Heart right ventricle (tissue), 16 donors: ENCODE measurements at regions of chr7 and their contacts with region 1.

Region 1: GRCh38 chr7:140003913-140004382 is 58.8 kb downstream of the PARP12 start:
- DNase-seq: no peak
- ATAC-seq: no peak
- H3K4me3 ChIP-seq: no peak overlapping the region
- H3K27ac ChIP-seq: no peak overlapping the region
- H3K4me1 ChIP-seq: no peaks in the 10 kb centered on the region
- H3K27me3 ChIP-seq: no peaks in the 10 kb centered on the region
- CTCF ChIP-seq: peak in 8 of 9 donors; percentile 11 to 58 (median 45)

Region 2: GRCh38 chr7:139494835-139495579 is 508.9 kb before region 1 on chr7:
- intact Hi-C with region 1: loop called (anchors 2 to 10 kb)
- DNase-seq: no peak
- ATAC-seq: peak in 1 of 8 donors; percentile 49
- H3K4me3 ChIP-seq: no peak overlapping the region
- H3K27ac ChIP-seq: no peak overlapping the region
- H3K4me1 ChIP-seq: peaks cover 0 to 13% (median 4%) of the 10 kb centered on the region in 9 donors
- H3K27me3 ChIP-seq: peaks cover 0 to 11% (median 8%) of the 10 kb centered on the region in 7 donors
- CTCF ChIP-seq: no peak

Region 3: GRCh38 chr7:139602143-139602722 is 401.7 kb before region 1 on chr7:
- intact Hi-C with region 1: loop called in 4 of 10 experiments (anchors 1 to 5 kb)
- DNase-seq: no peak
- ATAC-seq: peak in 7 of 8 donors; percentile 32 to 77 (median 47)
- H3K4me3 ChIP-seq: no peak overlapping the region
- H3K27ac ChIP-seq: no peak overlapping the region
- H3K4me1 ChIP-seq: peaks cover 0 to 16% (median 0%) of the 10 kb centered on the region in 9 donors
- H3K27me3 ChIP-seq: no peaks in the 10 kb centered on the region
- CTCF ChIP-seq: peak in 8 of 9 donors; percentile 39 to 67 (median 62)

Region 4: GRCh38 chr7:139645572-139646523 is 358.1 kb before region 1 on chr7:
- intact Hi-C with region 1: loop called (anchors 1 to 5 kb)
- DNase-seq: peak; percentile 78 to 89
- ATAC-seq: peak; percentile 49 to 74 (median 68)
- H3K4me3 ChIP-seq: no peak overlapping the region
- H3K27ac ChIP-seq: peak overlapping the region in 7 of 10 donors; percentile 16 to 84 (median 79)
- H3K4me1 ChIP-seq: peaks cover 5 to 58% (median 48%) of the 10 kb centered on the region in 9 donors
- H3K27me3 ChIP-seq: no peaks in the 10 kb centered on the region
- CTCF ChIP-seq: peak; percentile 88 to 94 (median 91)

Region 5: DNA sequence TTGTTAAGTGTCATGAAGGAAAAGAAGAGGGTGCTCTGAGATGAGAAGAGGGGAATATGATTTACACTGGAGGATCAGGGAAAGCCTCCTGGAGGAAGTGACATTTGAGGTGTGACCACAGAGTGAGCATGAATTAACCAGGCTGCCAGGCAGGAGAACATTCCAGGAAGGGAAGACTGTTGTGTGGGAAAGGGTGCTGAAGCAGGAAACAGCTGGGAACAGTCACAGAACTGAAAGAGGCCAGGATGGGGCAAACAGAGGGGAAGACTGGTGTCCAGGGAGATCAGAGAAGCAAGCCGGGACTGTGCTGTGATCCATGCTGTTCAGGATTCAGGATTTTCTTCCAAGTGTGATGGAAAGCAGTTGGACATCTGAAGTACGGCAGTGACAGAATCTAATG is 241.1 kb before region 1 on chr7:
- intact Hi-C with region 1: no loop called
- DNase-seq: no peak
- ATAC-seq: peak in 7 of 8 donors; percentile 34 to 75 (median 48)
- H3K4me3 ChIP-seq: no peak overlapping the region
- H3K27ac ChIP-seq: peak overlapping the region in 4 of 10 donors; percentile 6 to 24 (median 21)
- H3K4me1 ChIP-seq: peaks cover 4 to 91% (median 80%) of the 10 kb centered on the region in 9 donors
- H3K27me3 ChIP-seq: no peaks in the 10 kb centered on the region
- CTCF ChIP-seq: no peak

Region 6: GRCh38 chr7:139783647-139784385 is 220.1 kb before region 1 on chr7:
- intact Hi-C with region 1: loop called in 9 of 10 experiments (anchors 5 to 10 kb)
- DNase-seq: no peak
- ATAC-seq: no peak
- H3K4me3 ChIP-seq: no peak overlapping the region
- H3K27ac ChIP-seq: no peak overlapping the region
- H3K4me1 ChIP-seq: peaks cover 0 to 10% (median 4%) of the 10 kb centered on the region in 9 donors
- H3K27me3 ChIP-seq: peaks cover 0 to 9% (median 0%) of the 10 kb centered on the region in 7 donors
- CTCF ChIP-seq: no peak

Region 7: DNA sequence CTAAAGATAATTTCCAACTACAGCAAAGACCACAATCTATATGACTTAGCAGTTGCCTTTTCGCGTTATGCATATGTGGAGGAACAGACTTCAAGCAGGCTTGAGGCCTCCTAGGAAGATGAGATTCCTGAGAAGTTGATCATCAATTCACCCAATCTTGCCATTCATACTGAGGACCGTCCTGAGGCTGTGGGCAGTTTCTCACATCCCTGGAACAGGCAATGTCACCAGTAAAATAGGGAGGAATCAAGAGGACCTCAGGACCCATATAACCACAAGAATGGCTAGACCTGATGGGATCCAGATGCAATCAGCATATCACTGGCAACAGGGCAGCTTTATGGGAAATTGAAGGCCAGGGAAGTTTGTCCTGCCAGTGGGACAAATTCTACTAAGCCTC is 155.5 kb after region 1 on chr7:
- intact Hi-C with region 1: no loop called
- DNase-seq: no peak
- ATAC-seq: no peak
- H3K4me3 ChIP-seq: no peak overlapping the region
- H3K27ac ChIP-seq: no peak overlapping the region
- H3K4me1 ChIP-seq: peaks cover 0 to 80% (median 40%) of the 10 kb centered on the region in 9 donors
- H3K27me3 ChIP-seq: no peaks in the 10 kb centered on the region
- CTCF ChIP-seq: no peak